Kidney (tissue), 22 donors: ENCODE measurements at regions of chr3 and their contacts with region 1.

Region 1: GRCh38 chr3:135918580-135918962 is 47.0 kb upstream of the PPP2R3A start:
- DNase-seq: peak in 1 of 5 donors; percentile 44
- H3K4me3 ChIP-seq: no peak overlapping the region
- H3K27ac ChIP-seq: peak overlapping the region in 1 of 2 donors; percentile 24
- H3K4me1 ChIP-seq: peaks cover 0 to 24% (median 4%) of the 10 kb centered on the region in 3 donors
- H3K27me3 ChIP-seq: no peaks in the 10 kb centered on the region
- CTCF ChIP-seq: peak; percentile 43

Region 2: DNA sequence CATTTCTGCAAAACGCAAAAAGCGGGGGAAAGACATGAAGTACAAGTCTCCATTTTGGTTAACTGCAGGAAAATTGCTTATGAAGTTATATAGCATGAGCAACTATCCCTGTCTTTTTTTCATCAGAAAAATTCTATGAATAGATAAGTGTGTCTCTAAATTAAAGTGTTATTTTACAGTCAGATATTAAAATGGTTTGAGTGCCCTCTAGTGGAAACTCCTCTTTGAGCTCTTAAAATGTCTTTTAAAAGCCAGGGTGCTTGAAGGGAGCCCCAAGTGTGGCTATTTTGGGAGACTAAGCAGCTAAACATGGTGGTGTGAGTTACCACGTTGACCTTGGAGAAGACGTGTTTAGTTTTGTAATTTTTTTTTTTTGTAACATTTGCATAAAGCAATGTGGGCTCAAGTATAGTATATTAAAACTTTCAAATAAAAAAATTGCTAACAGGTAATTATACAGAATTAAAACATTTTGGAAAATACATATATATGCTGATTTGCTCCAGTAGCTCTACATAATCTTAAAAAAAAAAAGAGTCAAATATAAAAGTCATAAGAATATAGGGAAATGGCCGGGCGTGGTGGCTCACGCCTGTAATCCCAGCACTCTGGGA is 124.1 kb after region 1 on chr3:
- intact Hi-C with region 1: loop called (anchors 5 kb)
- DNase-seq: peak in 2 of 5 donors; percentile 67 to 73
- H3K4me3 ChIP-seq: no peak overlapping the region
- H3K27ac ChIP-seq: no peak overlapping the region
- H3K4me1 ChIP-seq: no peaks in the 10 kb centered on the region
- H3K27me3 ChIP-seq: no peaks in the 10 kb centered on the region
- CTCF ChIP-seq: peak; percentile 37